ENCODE measurements at regions of chr1 and their contacts with region 1.

Region 1: DNA sequence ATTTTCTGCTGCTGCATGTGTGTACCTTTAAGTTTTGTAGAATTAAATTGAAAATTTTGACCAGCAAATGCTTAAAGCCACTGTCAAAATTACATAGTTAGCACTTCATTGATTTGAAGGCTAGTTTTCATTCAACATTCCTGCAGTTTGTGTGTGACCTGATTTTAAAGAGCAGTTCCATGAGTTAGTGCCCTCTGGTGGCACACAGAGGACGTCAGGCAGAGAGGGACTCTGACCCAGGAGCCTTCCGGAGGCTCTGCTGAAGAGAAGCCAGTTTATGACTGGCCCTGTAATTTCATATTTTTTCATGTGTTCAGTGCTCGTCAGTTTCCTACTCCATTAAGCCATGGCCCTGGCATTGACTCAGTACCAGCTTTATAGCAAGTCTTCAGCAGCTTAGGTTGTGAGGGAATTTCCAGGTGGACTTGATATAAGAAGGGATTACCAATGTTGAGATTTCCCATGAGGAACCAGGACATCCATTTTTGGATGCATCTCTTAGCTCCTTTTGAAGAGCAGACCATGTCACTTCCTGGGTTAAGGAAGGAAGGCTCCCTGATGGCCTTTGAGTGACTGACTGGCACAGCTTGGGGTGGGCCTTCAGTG is 104.7 kb downstream of the CAMTA1 start:
- DNase-seq: peak; percentile 70
- H3K4me3 Mint-ChIP-seq: no peak overlapping the region
- H3K27ac Mint-ChIP-seq: peak overlapping the region; percentile 35
- H3K4me1 Mint-ChIP-seq: peaks cover 18% of the 10 kb centered on the region
- H3K27me3 Mint-ChIP-seq: no peaks in the 10 kb centered on the region
- CTCF ChIP-seq: peak; percentile 71

Region 2: GRCh38 chr1:6686294-6686693 is 203.7 kb before region 1 on chr1:
- CTCF ChIA-PET with region 1: no interaction called
- POLR2A ChIA-PET with region 1: no interaction called
- intact Hi-C with region 1: no loop called
- DNase-seq: no peak
- H3K4me3 Mint-ChIP-seq: no peak overlapping the region
- H3K27ac Mint-ChIP-seq: no peak overlapping the region
- H3K4me1 Mint-ChIP-seq: peaks cover 8% of the 10 kb centered on the region
- H3K27me3 Mint-ChIP-seq: no peaks in the 10 kb centered on the region
- CTCF ChIP-seq: no peak

Region 3: DNA sequence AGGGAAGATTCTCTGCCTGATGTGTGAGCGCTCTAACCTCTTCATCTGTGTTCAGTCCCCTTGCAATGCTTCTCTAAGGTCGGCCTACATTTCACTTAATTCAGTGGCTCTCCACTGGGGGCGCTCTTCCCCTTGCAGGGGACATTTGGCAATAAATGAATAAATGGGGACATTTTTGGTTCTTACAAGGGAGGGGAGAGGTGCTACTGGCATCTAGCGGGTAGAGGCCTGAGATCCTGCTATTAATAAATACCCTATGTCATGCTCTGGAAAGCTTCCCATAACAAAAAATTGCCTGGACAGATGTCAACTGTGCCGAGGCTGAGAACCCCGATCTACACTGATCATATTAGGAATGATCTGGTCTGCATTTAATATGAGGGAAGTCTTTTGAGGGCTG is 162.4 kb before region 1 on chr1:
- CTCF ChIA-PET with region 1: interaction called, 12 read pairs
- POLR2A ChIA-PET with region 1: interaction called, 3 read pairs
- intact Hi-C with region 1: loop called (anchors 1 kb)
- DNase-seq: peak; percentile 71
- H3K4me3 Mint-ChIP-seq: no peak overlapping the region
- H3K27ac Mint-ChIP-seq: no peak overlapping the region
- H3K4me1 Mint-ChIP-seq: peaks cover 12% of the 10 kb centered on the region
- H3K27me3 Mint-ChIP-seq: no peaks in the 10 kb centered on the region
- CTCF ChIP-seq: peak; percentile 88

Region 4: GRCh38 chr1:6794164-6794563 is 95.8 kb before region 1 on chr1:
- CTCF ChIA-PET with region 1: interaction called, 23 read pairs
- POLR2A ChIA-PET with region 1: interaction called, 3 read pairs
- intact Hi-C with region 1: loop called (anchors 1 kb)
- DNase-seq: peak; percentile 42
- H3K4me3 Mint-ChIP-seq: no peak overlapping the region
- H3K27ac Mint-ChIP-seq: no peak overlapping the region
- H3K4me1 Mint-ChIP-seq: peaks cover 20% of the 10 kb centered on the region
- H3K27me3 Mint-ChIP-seq: no peaks in the 10 kb centered on the region
- CTCF ChIP-seq: peak; percentile 55

Region 5: DNA sequence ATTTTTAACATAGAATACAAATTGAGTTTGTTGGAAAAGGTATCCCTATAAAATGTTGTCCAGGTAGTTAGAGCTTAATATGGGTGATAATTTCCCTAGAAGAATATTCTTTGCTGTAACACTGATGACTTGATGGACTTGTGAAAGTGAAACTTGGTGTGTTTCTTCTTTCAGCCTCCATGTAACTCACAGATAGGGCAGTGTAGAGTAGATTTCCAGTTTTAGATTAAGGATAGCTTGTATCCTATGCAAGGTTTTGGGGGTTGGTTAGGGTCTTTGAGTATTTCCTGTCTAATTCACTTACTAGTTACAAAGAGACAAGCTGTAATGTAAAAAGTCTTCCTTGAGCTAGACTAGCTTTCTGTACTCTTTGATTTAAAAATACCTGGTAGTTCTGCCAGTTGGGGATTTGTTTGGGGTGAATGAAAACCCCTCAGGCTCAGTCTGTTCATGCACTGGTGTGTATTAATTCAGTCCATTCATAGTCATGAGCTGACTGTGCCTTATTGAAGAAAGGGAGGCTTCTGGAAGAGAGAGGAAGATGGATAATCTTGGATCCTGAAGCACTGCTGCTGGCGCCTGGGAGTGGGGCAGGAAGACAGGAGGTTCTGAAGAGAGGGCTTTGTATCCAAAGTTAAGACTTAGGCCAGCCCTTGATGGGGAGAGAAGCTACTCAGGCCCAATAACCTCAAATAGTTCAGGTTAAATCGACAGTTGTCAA is 21.2 kb before region 1 on chr1:
- CTCF ChIA-PET with region 1: interaction called, 14 read pairs
- POLR2A ChIA-PET with region 1: interaction called, 5 read pairs
- intact Hi-C with region 1: no loop called
- DNase-seq: no peak
- H3K4me3 Mint-ChIP-seq: peak overlapping the region; percentile 63
- H3K27ac Mint-ChIP-seq: peak overlapping the region; percentile 95
- H3K4me1 Mint-ChIP-seq: peaks cover 55% of the 10 kb centered on the region
- H3K27me3 Mint-ChIP-seq: no peaks in the 10 kb centered on the region
- CTCF ChIP-seq: no peak

Region 6: DNA sequence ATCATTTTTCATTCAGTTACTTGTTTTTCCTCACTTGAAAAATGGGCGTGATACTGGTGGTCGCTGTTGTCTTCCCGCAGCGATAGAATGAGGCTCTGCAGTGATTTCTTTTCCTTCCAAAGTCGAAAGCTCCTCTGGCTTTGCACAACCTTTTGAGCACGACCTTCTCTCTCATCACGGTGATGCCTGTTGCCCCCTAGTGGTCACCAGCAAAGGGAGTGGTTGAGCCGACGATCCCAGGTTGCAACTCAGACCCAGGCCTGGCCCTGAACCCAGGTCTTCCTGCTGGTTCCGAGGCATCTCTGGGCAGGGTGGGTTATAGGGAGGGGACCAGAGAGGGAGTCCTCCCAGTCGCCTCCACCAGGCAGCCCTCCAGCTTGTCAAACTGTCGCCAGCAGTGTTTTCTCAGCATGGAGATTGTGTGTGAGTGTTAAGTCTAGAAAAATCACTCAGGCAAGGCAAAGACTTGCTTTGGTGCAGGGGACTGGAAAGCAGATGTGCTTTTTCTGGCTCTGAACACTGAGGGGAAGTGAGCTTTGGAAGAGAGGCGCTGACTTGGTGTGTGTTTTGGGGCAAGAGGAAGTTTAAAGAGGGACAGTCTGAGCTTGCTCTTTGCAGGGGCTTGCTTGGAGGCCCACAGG is 180.5 kb after region 1 on chr1:
- CTCF ChIA-PET with region 1: interaction called, 4 read pairs
- POLR2A ChIA-PET with region 1: interaction called, 4 read pairs
- intact Hi-C with region 1: loop called (anchors 1 kb)
- DNase-seq: peak; percentile 70
- H3K4me3 Mint-ChIP-seq: no peak overlapping the region
- H3K27ac Mint-ChIP-seq: no peak overlapping the region
- H3K4me1 Mint-ChIP-seq: no peaks in the 10 kb centered on the region
- H3K27me3 Mint-ChIP-seq: peaks cover 45% of the 10 kb centered on the region
- CTCF ChIP-seq: peak; percentile 73

Region 7: GRCh38 chr1:7097938-7098592 is 208.1 kb after region 1 on chr1:
- CTCF ChIA-PET with region 1: no interaction called
- POLR2A ChIA-PET with region 1: no interaction called
- intact Hi-C with region 1: no loop called
- DNase-seq: no peak
- H3K4me3 Mint-ChIP-seq: no peak overlapping the region
- H3K27ac Mint-ChIP-seq: no peak overlapping the region
- H3K4me1 Mint-ChIP-seq: no peaks in the 10 kb centered on the region
- H3K27me3 Mint-ChIP-seq: peaks cover 60% of the 10 kb centered on the region
- CTCF ChIP-seq: no peak

Measured in MCF 10A (cell line).